ENCODE measurements at regions of chr7 and their contacts with region 1.

Region 1: GRCh38 chr7:1473864-1474512 is 14.7 kb upstream of the MICALL2 start:
- DNase-seq: peak; percentile 78 to 87 (median 83)
- H3K4me3 ChIP-seq: no peak overlapping the region
- H3K4me3 Mint-ChIP-seq: no peak overlapping the region
- H3K27ac ChIP-seq: no peak overlapping the region
- H3K27ac Mint-ChIP-seq: no peak overlapping the region
- H3K4me1 ChIP-seq: peaks cover 6% of the 10 kb centered on the region
- H3K4me1 Mint-ChIP-seq: peaks cover 0 to 14% (median 4%) of the 10 kb centered on the region in 3 donors
- H3K27me3 ChIP-seq: no peaks in the 10 kb centered on the region
- H3K27me3 Mint-ChIP-seq: no peaks in the 10 kb centered on the region

Region 2: GRCh38 chr7:1297017-1297960 is 176.7 kb before region 1 on chr7:
- CTCF ChIA-PET with region 1: no interaction called
- POLR2A ChIA-PET with region 1: no interaction called
- DNase-seq: peak in 1 of 5 donors; percentile 26
- H3K4me3 ChIP-seq: no peak overlapping the region
- H3K4me3 Mint-ChIP-seq: no peak overlapping the region
- H3K27ac ChIP-seq: no peak overlapping the region
- H3K27ac Mint-ChIP-seq: no peak overlapping the region
- H3K4me1 ChIP-seq: no peaks in the 10 kb centered on the region
- H3K4me1 Mint-ChIP-seq: peaks cover 0 to 2% (median 0%) of the 10 kb centered on the region in 3 donors
- H3K27me3 ChIP-seq: no peaks in the 10 kb centered on the region
- H3K27me3 Mint-ChIP-seq: peaks cover 10 to 11% of the 10 kb centered on the region in 2 donors

Region 3: DNA sequence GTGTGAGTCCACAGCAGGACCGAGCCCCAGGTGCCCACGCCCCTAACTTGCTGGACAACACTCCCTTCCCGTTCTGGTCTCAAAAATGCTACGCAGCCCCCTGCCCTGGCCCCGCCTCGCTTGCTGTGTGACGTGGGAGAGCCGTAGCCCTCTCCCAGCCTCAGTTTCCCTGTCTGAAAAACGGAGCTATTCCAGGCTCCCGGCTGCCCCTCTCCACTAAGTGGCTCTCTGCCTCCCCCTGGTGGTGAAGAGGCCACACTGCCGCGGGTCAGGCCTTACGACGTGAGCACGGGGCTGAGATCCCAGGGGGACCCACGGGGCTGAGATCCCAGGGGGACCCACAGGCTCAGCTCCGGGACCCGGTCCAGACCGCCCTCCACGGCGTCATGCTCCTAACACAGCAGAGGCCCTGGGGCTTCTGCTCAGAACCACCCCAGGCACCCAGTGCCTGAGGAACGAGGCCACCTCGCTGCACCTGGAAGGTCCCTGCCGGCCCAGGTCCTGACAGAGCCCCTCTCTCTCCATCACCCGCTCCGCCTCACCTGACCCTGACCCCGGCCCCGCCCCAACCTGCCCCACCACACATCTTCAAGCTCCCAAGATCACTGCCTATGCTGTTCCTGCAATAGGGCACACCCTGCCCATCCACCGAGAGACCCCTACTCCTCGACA is 41.4 kb before region 1 on chr7:
- CTCF ChIA-PET with region 1: interaction called, 19 read pairs
- POLR2A ChIA-PET with region 1: no interaction called
- DNase-seq: peak; percentile 61 to 83 (median 74)
- H3K4me3 ChIP-seq: no peak overlapping the region
- H3K4me3 Mint-ChIP-seq: peak overlapping the region in 3 of 7 donors; percentile 35 to 52 (median 48)
- H3K27ac ChIP-seq: no peak overlapping the region
- H3K27ac Mint-ChIP-seq: peak overlapping the region in 2 of 8 donors; percentile 64 to 73
- H3K4me1 ChIP-seq: peaks cover 5% of the 10 kb centered on the region
- H3K4me1 Mint-ChIP-seq: peaks cover 2 to 4% (median 4%) of the 10 kb centered on the region in 3 donors
- H3K27me3 ChIP-seq: no peaks in the 10 kb centered on the region
- H3K27me3 Mint-ChIP-seq: peaks cover 4% of the 10 kb centered on the region in 2 donors

Region 4: GRCh38 chr7:1454972-1455939 is 18.7 kb before region 1 on chr7:
- CTCF ChIA-PET with region 1: interaction called, 14 read pairs
- POLR2A ChIA-PET with region 1: no interaction called
- DNase-seq: no peak
- H3K4me3 ChIP-seq: no peak overlapping the region
- H3K4me3 Mint-ChIP-seq: peak overlapping the region in 1 of 7 donors; percentile 54
- H3K27ac ChIP-seq: no peak overlapping the region
- H3K27ac Mint-ChIP-seq: no peak overlapping the region
- H3K4me1 ChIP-seq: peaks cover 14% of the 10 kb centered on the region
- H3K4me1 Mint-ChIP-seq: peaks cover 0 to 16% (median 5%) of the 10 kb centered on the region in 3 donors
- H3K27me3 ChIP-seq: no peaks in the 10 kb centered on the region
- H3K27me3 Mint-ChIP-seq: no peaks in the 10 kb centered on the region

Region 5: GRCh38 chr7:1460821-1461645 is 13.0 kb before region 1 on chr7:
- CTCF ChIA-PET with region 1: interaction called, 14 read pairs
- POLR2A ChIA-PET with region 1: no interaction called
- DNase-seq: no peak
- H3K4me3 ChIP-seq: peak overlapping the region; percentile 47
- H3K4me3 Mint-ChIP-seq: peak overlapping the region in 1 of 7 donors; percentile 34
- H3K27ac ChIP-seq: peak overlapping the region; percentile 87
- H3K27ac Mint-ChIP-seq: peak overlapping the region in 1 of 8 donors; percentile 70
- H3K4me1 ChIP-seq: peaks cover 14% of the 10 kb centered on the region
- H3K4me1 Mint-ChIP-seq: peaks cover 7 to 35% (median 10%) of the 10 kb centered on the region in 3 donors
- H3K27me3 ChIP-seq: no peaks in the 10 kb centered on the region
- H3K27me3 Mint-ChIP-seq: no peaks in the 10 kb centered on the region

Measured in CD8-positive, alpha-beta memory T cell (primary cell).